Common myeloid progenitor, CD34-positive (primary cell): ENCODE measurements at regions of chr3 and their contacts with region 1.

Region 1: DNA sequence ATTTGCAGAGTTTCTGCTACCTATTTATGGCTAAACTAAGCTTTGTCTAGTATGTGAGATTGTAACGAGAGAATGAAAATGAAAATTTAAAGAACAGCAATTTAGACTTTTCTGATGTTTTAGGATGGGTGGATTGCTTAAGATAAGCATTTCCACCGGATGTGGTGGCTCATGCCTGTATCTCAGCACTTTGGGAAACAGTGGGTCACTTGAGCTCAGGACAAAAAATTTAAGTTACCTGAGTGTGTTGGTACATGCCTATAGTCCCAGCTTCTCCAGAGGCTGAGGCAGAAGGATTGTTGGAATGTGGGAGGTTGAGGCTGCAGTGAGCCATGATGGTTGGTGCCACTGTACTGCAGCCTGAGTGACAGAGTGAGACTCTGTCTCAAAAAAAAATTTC is 3.3 kb downstream of the PPP4R2 start:
- DNase-seq: peak in 1 of 3 donors; percentile 31
- H3K4me3 ChIP-seq: peak overlapping the region in 3 of 7 experiments; percentile 31 to 96 (median 95)
- H3K27ac ChIP-seq: peak overlapping the region in 1 of 2 experiments; percentile 14
- H3K4me1 ChIP-seq: peaks cover 30 to 36% (median 33%) of the 10 kb centered on the region in 4 experiments
- H3K27me3 ChIP-seq: no peaks in the 10 kb centered on the region

Region 2: DNA sequence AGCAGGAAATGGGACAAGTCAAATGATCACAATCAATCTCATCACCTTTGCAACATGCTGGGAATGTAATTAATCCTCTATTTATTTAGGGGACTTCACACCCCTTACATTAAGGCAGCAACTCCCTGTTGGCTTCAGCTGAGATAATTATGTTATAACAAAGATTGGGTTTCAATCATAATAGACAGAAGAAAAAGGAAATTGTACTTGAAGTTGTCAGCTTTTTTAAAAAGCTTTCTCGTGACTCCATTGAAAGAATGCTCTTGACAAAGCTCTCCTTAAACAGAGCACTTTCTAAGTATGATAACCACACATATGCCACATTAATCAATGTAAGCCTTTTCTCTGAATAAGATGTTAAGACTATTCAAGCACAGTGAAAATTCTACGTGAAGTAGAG is 217.4 kb before region 1 on chr3:
- CTCF ChIA-PET with region 1: no interaction called
- POLR2A ChIA-PET with region 1: no interaction called
- DNase-seq: no peak
- H3K4me3 ChIP-seq: no peak overlapping the region
- H3K27ac ChIP-seq: no peak overlapping the region
- H3K4me1 ChIP-seq: no peaks in the 10 kb centered on the region
- H3K27me3 ChIP-seq: no peaks in the 10 kb centered on the region

Region 3: DNA sequence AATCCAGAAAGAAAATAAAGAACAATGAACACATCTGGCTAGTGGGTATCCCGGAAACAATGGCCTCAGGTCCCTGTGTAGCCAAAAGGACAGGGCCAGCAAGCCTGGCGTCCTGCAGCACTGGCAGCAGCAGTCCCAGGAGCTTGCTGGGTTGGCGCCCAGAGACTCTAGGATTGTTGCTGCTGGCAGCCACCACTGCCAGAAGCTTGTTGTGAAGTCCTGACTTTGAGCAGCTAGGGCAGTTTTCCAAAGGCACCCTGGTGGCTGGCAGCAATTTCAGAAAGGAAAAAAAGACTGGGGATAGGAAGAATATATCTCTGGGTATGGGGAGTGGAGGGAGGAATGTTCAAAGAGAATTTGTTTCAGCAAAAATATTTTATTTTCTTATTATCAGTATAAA is 163.0 kb before region 1 on chr3:
- CTCF ChIA-PET with region 1: no interaction called
- POLR2A ChIA-PET with region 1: no interaction called
- DNase-seq: no peak
- H3K4me3 ChIP-seq: no peak overlapping the region
- H3K27ac ChIP-seq: no peak overlapping the region
- H3K4me1 ChIP-seq: no peaks in the 10 kb centered on the region
- H3K27me3 ChIP-seq: no peaks in the 10 kb centered on the region

Region 4: DNA sequence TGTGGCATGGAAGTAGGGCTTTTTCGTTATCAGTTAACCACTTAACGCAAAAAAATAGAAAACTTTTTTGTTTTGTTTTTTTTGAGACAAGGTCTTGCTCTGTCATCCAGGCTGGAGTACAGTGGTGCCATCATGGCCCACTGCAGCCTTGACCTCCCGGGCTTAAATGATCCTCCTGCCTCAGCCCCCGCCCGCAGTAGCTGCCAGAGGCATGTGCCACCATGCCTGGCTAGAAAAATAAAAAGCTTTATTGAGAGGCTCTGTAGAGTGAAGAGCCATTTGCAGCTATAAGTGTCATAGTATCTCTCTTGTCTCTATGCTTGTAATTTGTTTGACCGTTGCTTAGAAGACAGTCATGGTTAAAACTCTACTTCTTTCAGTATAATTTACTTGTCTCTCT is 10.2 kb after region 1 on chr3:
- CTCF ChIA-PET with region 1: interaction called, 17 read pairs
- POLR2A ChIA-PET with region 1: interaction called, 3 read pairs
- DNase-seq: no peak
- H3K4me3 ChIP-seq: no peak overlapping the region
- H3K27ac ChIP-seq: no peak overlapping the region
- H3K4me1 ChIP-seq: peaks cover 0 to 2% (median 0%) of the 10 kb centered on the region in 4 experiments
- H3K27me3 ChIP-seq: no peaks in the 10 kb centered on the region